Activated T-helper 1 cell treated with anti-CD3 and anti-CD28 coated beads, Interleukin-12 subunit alpha, Interleukin-12 subunit beta, Interleukin-2, Interleukin-4 antibody, amounts not matched to agents 30 ng/mL and 10 ng/mL and 1 ng/mL, durations not matched to agents 14 hours and 24 hours and 36 hours (primary cell): ENCODE measurements at regions of chr14 and their contacts with region 1.

Region 1: DNA sequence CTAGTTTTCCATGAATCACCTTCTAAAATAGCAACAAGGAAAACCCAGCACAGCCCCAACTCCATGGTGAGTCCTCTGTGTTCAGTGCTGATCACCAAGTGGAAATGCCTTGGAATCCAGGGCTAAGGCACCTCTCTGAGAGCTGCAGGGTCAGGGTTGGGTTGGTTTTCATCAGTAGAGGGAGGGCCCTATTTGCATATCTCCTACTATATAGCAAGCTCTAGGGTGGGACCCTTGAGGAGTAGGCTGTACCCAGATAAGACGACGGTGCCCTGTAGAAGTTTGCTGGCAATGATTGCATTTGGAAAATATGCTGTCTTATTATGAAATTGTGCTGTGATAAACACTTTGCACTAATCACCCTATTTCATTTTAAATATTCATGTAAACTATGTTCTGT is 1011.8 kb downstream of the TMEM121 start:
- DNase-seq: no peak
- H3K4me3 Mint-ChIP-seq: no peak overlapping the region
- H3K27ac Mint-ChIP-seq: no peak overlapping the region
- H3K4me1 Mint-ChIP-seq: peaks cover 11% of the 10 kb centered on the region
- H3K27me3 Mint-ChIP-seq: peaks cover 40% of the 10 kb centered on the region

Region 2: GRCh38 chr14:106522990-106523389 is 15.2 kb before region 1 on chr14:
- intact Hi-C with region 1: no loop called
- DNase-seq: no peak
- H3K4me3 Mint-ChIP-seq: no peak overlapping the region
- H3K27ac Mint-ChIP-seq: no peak overlapping the region
- H3K4me1 Mint-ChIP-seq: peaks cover 5% of the 10 kb centered on the region
- H3K27me3 Mint-ChIP-seq: peaks cover 18% of the 10 kb centered on the region

Region 3: DNA sequence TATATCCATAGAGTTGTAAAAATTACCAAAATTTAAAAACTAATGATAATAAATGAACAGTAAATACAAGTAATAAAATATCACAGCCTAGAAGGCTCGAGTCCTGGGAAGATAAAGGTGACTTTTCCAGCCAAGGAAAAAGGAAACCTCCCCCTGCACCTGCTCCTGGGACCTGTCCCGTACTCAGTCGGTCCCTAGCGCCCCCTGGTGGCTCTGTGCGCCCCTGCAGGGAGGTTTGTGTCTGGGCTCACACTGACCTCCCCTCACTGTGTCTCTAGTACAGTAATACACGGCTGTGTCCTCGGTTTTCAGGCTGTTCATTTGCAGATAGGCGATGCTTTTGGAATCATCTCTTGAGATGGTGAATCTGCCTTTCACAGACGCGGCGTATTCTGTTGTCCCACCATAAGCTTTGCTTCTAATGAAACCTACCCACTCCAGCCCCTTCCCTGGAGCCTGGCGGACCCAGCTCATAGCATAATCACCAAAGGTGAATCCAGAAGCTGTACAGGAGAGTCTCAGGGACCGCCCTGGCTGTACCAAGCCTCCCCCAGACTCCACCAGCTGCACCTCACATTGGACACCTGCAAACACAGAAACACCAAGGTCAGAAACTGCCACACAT is 18.6 kb after region 1 on chr14:
- intact Hi-C with region 1: loop called (anchors 1 kb)
- DNase-seq: peak; percentile 59
- H3K4me3 Mint-ChIP-seq: no peak overlapping the region
- H3K27ac Mint-ChIP-seq: no peak overlapping the region
- H3K4me1 Mint-ChIP-seq: no peaks in the 10 kb centered on the region
- H3K27me3 Mint-ChIP-seq: peaks cover 14% of the 10 kb centered on the region